Activated naive CD8-positive, alpha-beta T cell treated with anti-CD3 and anti-CD28 coated beads, Interleukin-2, amount 10 ng/mL, durations not matched to agents 7 days and 5 days (primary cell): ENCODE measurements at regions of chr17 and their contacts with region 1.

Region 1: DNA sequence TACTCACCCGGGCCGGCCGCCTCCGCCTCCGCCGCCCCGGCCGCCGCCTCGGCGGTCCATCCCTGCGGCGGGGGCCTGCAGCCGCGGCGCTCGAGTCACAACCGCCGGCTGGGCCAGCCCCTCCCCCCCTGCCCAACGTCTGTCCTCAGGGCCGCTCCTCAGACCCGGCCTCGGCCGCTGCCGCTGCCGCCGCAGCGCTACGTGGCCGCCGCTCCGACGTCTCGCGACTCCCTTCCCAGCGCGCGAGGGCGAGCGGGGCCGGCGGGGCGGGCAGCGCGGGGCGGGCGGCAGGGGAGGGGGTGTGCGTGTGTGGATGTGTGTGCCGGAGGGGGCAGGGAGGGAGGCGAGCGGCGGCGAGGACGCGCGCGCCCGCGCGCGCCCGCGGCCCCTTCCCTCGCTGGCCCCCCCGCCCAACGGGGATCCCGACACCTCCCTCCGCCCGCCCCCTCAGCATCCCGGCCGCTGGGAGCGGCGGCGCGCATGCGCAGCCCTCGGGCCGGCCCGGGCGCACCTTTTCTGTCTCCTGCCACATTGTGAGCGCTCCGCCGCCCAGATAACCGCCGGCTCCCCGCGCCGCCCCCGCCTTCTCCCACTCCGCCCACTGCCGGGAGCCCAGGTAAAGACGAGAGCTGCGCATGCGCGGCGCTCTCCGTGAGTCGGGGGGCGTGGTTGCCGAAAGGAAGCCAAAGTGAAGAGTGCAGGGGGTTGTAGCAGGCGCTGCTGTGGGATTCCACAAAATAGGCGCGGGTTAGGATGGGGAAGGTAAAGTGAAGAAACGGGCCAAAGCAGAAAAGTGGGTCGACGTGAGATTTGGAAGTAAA is at the start of gene ZNF652:
- DNase-seq: peak; percentile 97
- ATAC-seq: peak; percentile 71
- H3K4me3 Mint-ChIP-seq: peak within 1 kb of the TSS; percentile 95
- H3K27ac Mint-ChIP-seq: peak within 1 kb of the TSS; percentile 95
- H3K4me1 Mint-ChIP-seq: peaks cover 53% of the 10 kb centered on the region
- H3K27me3 Mint-ChIP-seq: no peaks in the 10 kb centered on the region
- total RNA-seq, gene ZNF652: 43.6 to 47.7 TPM

Region 2: GRCh38 chr17:49299996-49300395 is 62.1 kb before region 1 on chr17:
- POLR2A ChIA-PET with region 1: no interaction called
- DNase-seq: no peak
- ATAC-seq: no peak
- H3K4me3 Mint-ChIP-seq: no peak overlapping the region
- H3K27ac Mint-ChIP-seq: no peak overlapping the region
- H3K4me1 Mint-ChIP-seq: no peaks in the 10 kb centered on the region
- H3K27me3 Mint-ChIP-seq: no peaks in the 10 kb centered on the region

Region 3: DNA sequence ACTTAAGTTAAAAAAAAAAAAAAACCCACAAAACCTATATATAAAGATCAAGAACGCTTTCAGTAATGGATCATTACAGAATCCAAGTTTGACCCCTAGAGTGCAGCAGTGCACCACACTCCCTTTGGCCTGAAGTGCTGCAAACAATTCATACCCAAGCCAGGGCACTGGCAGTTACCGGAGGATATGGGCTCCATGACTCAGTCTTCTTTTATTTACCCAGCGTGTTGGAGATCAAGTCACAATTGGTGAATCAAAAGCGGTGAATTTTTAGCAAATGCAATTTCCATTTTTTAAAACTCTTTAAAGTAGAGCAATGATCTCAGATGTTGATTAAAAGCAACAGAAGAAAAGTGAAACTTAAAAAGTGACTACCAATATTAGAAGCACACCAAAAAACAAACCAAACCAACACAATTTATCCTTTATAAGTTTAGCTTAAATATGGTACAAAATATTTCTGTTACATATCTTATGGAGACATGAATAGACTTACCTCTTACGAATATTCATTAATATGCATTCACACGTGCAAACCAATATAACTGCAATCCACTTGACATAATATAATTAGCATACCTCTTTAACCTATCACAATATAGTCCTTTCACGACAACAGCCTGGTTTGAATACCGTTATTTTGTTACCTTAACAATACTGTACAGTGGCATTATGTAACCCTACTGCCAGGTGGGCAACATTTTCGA is 46.4 kb before region 1 on chr17:
- POLR2A ChIA-PET with region 1: interaction called, 11 read pairs
- DNase-seq: peak; percentile 59
- ATAC-seq: peak; percentile 99
- H3K4me3 Mint-ChIP-seq: peak overlapping the region; percentile 47
- H3K27ac Mint-ChIP-seq: peak overlapping the region; percentile 79
- H3K4me1 Mint-ChIP-seq: peaks cover 27% of the 10 kb centered on the region
- H3K27me3 Mint-ChIP-seq: no peaks in the 10 kb centered on the region

Region 4: DNA sequence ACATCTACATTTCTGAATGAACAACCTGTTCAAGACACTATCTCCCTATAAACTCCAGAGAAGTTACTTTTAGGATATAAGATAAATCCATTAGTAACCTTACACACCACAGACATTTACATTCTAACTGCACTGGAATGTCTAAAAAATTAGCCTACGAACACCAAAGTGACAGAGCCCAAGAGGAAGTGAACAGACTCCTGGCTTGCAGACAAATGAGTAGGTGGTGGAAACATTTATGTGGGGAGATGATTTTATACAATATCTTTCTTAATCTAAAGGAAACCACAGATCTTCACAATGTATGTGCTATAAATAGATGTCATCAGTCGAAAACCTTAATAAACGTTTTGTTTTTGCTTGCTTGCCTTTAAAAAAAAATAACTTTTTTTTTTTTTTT is 18.8 kb before region 1 on chr17:
- POLR2A ChIA-PET with region 1: interaction called, 58 read pairs
- DNase-seq: no peak
- ATAC-seq: peak; percentile 40
- H3K4me3 Mint-ChIP-seq: peak overlapping the region; percentile 74
- H3K27ac Mint-ChIP-seq: peak overlapping the region; percentile 87
- H3K4me1 Mint-ChIP-seq: peaks cover 53% of the 10 kb centered on the region
- H3K27me3 Mint-ChIP-seq: no peaks in the 10 kb centered on the region

Region 5: GRCh38 chr17:49375544-49375943 is 13.4 kb after region 1 on chr17:
- POLR2A ChIA-PET with region 1: no interaction called
- DNase-seq: no peak
- ATAC-seq: no peak
- H3K4me3 Mint-ChIP-seq: no peak overlapping the region
- H3K27ac Mint-ChIP-seq: no peak overlapping the region
- H3K4me1 Mint-ChIP-seq: no peaks in the 10 kb centered on the region
- H3K27me3 Mint-ChIP-seq: peaks cover 4% of the 10 kb centered on the region

Region 6: DNA sequence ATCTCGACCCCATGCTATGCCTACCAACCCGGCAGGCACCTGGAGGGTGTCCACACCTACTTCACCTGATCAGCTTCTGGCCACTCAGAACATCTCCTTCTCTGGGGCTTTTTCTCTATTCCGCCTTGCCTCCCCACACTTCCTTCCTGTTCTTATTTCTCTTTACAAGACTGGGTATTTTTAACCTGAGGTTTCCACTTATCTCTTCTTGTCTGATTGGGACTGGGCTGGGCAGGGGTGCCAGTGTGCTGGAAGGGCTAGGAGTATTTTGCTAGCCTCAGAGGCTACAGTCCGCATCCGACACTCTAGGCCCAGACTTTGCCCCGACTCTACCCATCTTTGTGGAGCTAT is 26.2 kb after region 1 on chr17:
- POLR2A ChIA-PET with region 1: interaction called, 20 read pairs
- DNase-seq: peak; percentile 48
- ATAC-seq: peak; percentile 85
- H3K4me3 Mint-ChIP-seq: peak overlapping the region; percentile 81
- H3K27ac Mint-ChIP-seq: peak overlapping the region; percentile 97
- H3K4me1 Mint-ChIP-seq: peaks cover 41% of the 10 kb centered on the region
- H3K27me3 Mint-ChIP-seq: no peaks in the 10 kb centered on the region